Caco-2 (cell line): ENCODE measurements at regions of chr11 and their contacts with region 1.

Region 1: GRCh38 chr11:94747146-94748080 is 20.7 kb upstream of the AMOTL1 start:
- DNase-seq: peak; percentile 61 to 83
- H3K4me3 ChIP-seq: no peak overlapping the region
- H3K4me3 Mint-ChIP-seq: peak overlapping the region; percentile 30
- H3K27ac Mint-ChIP-seq: peak overlapping the region; percentile 45
- H3K4me1 ChIP-seq: peaks cover 51% of the 10 kb centered on the region
- H3K4me1 Mint-ChIP-seq: peaks cover 47% of the 10 kb centered on the region
- H3K27me3 ChIP-seq: no peaks in the 10 kb centered on the region
- H3K27me3 Mint-ChIP-seq: no peaks in the 10 kb centered on the region
- CTCF ChIP-seq: no peak

Region 2: DNA sequence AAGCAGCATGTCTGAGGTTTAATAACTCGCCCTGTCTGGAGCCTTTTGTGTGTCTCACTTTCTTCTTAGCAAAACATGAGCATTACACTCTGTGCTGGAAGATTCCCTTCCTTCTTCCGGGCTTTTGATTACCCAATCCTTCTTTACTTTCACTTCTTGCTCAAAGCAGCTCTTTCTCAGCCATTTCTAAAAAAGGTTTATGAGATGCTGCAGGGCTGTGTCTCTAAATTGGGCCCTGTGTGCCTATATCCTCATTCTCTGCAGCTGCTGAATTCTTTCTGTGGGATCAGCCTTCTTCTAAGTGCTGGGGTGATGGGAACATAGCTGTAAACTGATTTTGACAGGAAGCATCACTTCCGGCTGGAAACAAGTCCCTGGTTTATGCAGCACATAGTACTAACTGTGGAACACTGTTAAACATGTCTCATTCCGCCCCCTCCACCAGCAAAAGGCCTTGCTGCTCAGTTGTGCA is 108.5 kb before region 1 on chr11:
- CTCF ChIA-PET with region 1: no interaction called
- POLR2A ChIA-PET with region 1: interaction called, 3 read pairs
- intact Hi-C with region 1: loop called (anchors 5 kb)
- DNase-seq: no peak
- H3K4me3 ChIP-seq: no peak overlapping the region
- H3K4me3 Mint-ChIP-seq: no peak overlapping the region
- H3K27ac Mint-ChIP-seq: no peak overlapping the region
- H3K4me1 ChIP-seq: peaks cover 29% of the 10 kb centered on the region
- H3K4me1 Mint-ChIP-seq: peaks cover 26% of the 10 kb centered on the region
- H3K27me3 ChIP-seq: no peaks in the 10 kb centered on the region
- H3K27me3 Mint-ChIP-seq: no peaks in the 10 kb centered on the region
- CTCF ChIP-seq: no peak

Region 3: DNA sequence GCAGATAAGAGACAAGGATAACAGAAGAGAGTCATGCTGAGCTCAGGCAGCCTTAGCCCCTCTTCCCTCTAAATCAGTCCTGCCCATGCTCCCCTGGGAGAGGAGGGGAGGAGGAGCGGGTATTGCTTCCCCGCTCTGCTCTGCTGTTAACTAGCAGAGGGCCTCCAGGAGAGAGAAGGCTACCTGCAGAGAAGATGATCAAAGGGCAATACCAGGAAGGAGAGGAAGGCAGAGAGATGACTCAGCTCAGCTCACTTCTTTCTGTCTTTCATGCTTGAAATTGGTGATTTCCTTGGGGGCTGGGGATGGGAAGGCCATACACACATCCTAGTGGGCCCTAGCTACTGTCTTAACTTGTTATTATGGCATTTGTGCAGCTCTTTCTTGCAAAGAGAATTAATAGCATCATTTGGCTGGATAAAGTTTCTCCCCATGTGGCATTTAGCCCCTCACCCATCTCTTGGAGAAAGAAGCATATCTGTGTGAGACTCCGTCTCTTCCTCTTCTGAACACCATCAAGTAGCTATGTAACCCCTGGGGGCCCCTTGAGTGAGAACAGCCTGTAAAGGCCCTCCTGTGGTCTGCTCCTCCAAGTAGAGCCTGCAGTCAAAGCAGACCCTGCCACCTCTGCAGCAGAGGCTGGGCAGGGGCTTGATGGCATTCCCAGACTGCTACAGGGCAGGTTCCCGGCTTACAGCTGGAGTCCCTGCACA is 12.7 kb before region 1 on chr11:
- CTCF ChIA-PET with region 1: interaction called, 9 read pairs
- POLR2A ChIA-PET with region 1: no interaction called
- intact Hi-C with region 1: loop called (anchors 1 kb)
- DNase-seq: no peak
- H3K4me3 ChIP-seq: no peak overlapping the region
- H3K4me3 Mint-ChIP-seq: no peak overlapping the region
- H3K27ac Mint-ChIP-seq: peak overlapping the region; percentile 7
- H3K4me1 ChIP-seq: peaks cover 55% of the 10 kb centered on the region
- H3K4me1 Mint-ChIP-seq: peaks cover 11% of the 10 kb centered on the region
- H3K27me3 ChIP-seq: no peaks in the 10 kb centered on the region
- H3K27me3 Mint-ChIP-seq: no peaks in the 10 kb centered on the region
- CTCF ChIP-seq: no peak